Psoas muscle (tissue), 8 donors: ENCODE measurements at regions of chr15 and their contacts with region 1.

Region 1: DNA sequence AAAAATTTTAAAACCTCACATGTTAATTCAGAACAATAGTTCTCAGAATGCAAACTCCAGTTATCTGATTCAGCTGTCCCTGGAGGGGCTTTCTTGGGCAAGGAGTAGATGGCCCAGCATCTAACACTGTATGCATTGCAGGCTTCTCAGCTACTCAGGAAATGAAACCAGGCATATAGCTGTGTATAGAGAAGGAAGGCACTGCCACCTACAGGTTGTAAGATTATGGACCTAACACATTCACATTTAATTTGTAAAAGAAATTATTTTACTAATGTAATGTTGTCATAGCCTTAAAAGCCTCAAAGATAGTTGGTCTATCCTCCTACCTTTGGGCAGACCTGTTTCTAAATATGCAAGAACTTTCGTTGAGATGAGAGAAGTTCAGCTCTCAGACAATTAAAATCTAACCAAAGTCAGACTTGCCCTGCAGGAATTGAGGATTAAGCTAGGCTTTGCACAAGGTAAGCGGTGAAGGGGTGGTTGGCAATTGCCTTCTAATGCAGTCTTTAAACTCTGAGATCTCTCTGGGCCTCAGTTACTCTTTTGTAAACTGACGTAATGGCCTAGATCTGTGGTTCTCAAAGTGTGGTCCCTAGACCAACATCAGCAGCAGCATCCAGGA is 132.8 kb upstream of the SLC24A5 start:
- DNase-seq: no peak
- ATAC-seq: peak; percentile 81 to 93 (median 84)
- H3K4me3 ChIP-seq: no peak overlapping the region
- H3K27ac ChIP-seq: no peak overlapping the region
- H3K4me1 ChIP-seq: no peaks in the 10 kb centered on the region
- H3K27me3 ChIP-seq: no peaks in the 10 kb centered on the region
- CTCF ChIP-seq: peak; percentile 84

Region 2: GRCh38 chr15:47473832-47474231 is 514.2 kb before region 1 on chr15:
- intact Hi-C with region 1: loop called (anchors 5 kb)
- DNase-seq: peak; percentile 48 to 68
- ATAC-seq: peak; percentile 44 to 81 (median 70)
- H3K4me3 ChIP-seq: no peak overlapping the region
- H3K27ac ChIP-seq: no peak overlapping the region
- H3K4me1 ChIP-seq: peaks cover 18% of the 10 kb centered on the region
- H3K27me3 ChIP-seq: no peaks in the 10 kb centered on the region
- CTCF ChIP-seq: no peak

Region 3: DNA sequence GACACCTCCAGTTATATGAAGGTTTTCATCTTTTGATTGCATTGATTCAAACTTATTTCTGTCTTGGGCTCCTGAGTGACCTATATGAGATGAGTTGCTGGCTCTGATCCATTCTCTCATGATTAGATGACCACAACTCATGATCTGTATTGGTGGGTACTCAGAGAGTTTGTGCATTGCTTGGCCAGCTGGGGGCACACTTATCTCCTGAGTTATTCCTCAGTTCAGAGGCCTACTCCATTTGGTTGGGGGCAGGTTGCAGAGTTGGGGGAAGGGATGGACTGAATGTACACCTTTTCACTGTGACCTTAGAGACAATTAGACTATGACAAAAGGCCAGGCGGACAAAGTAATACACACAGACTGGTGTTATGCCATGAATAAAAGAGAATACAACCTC is 436.9 kb before region 1 on chr15:
- intact Hi-C with region 1: loop called in 1 of 2 experiments (anchors 10 kb)
- DNase-seq: no peak
- ATAC-seq: no peak
- H3K4me3 ChIP-seq: no peak overlapping the region
- H3K27ac ChIP-seq: no peak overlapping the region
- H3K4me1 ChIP-seq: no peaks in the 10 kb centered on the region
- H3K27me3 ChIP-seq: no peaks in the 10 kb centered on the region
- CTCF ChIP-seq: no peak

Region 4: DNA sequence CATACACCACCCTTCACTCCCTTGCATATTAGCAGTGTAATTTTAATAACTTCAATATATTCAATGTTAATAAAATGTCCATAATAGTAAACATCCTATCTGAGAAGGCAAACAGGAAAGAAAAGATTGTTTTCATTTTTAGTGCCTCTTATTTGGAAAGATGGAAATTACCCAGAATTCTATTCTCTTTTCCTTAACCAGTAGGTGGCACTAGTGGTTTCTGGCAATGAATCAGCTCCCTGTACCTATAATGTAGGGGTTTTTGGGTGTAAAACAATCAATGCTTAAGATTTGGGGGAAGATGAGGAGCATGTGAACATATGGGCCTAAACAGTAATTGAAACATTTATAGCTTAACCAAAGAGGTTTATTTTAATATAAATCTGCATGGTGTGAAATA is 276.4 kb before region 1 on chr15:
- intact Hi-C with region 1: loop called (anchors 2 to 5 kb)
- DNase-seq: no peak
- ATAC-seq: no peak
- H3K4me3 ChIP-seq: no peak overlapping the region
- H3K27ac ChIP-seq: no peak overlapping the region
- H3K4me1 ChIP-seq: peaks cover 12% of the 10 kb centered on the region
- H3K27me3 ChIP-seq: no peaks in the 10 kb centered on the region
- CTCF ChIP-seq: peak; percentile 58

Region 5: GRCh38 chr15:47908950-47909670 is 78.9 kb before region 1 on chr15:
- intact Hi-C with region 1: loop called in 1 of 2 experiments (anchors 2 kb)
- DNase-seq: no peak
- ATAC-seq: no peak
- H3K4me3 ChIP-seq: no peak overlapping the region
- H3K27ac ChIP-seq: no peak overlapping the region
- H3K4me1 ChIP-seq: no peaks in the 10 kb centered on the region
- H3K27me3 ChIP-seq: no peaks in the 10 kb centered on the region
- CTCF ChIP-seq: no peak

Region 6: DNA sequence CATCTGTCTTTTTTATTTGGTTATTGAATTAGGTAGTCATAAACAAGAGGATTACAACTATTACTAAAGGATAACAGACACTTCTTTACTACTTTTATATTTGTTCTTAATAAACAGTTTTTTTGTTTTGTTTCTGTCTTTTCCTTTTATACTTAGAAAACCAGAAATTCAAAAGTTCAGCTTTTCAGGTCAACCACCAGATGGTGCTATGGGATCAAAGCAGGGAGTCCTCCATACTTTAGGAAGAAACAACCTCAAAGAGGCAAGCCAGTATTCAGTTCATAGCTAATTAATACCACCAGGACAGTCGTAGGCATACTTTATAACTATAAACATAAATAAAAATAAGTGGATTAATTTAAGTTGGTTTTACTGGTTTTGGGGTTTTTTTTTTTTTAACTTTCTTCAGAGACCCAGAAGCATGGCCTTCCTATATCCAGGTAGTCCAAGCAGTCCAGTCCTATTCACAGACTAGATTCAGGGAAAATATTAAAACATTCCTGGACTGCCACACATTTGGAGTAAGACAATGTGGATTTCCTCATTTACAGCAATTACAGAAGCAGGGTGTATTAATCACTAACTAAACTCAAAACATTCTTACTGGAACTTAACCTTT is 873.9 kb after region 1 on chr15:
- intact Hi-C with region 1: no loop called
- DNase-seq: no peak
- ATAC-seq: peak in 3 of 4 donors; percentile 56 to 85 (median 61)
- H3K4me3 ChIP-seq: no peak overlapping the region
- H3K27ac ChIP-seq: no peak overlapping the region
- H3K4me1 ChIP-seq: no peaks in the 10 kb centered on the region
- H3K27me3 ChIP-seq: no peaks in the 10 kb centered on the region
- CTCF ChIP-seq: peak; percentile 94